Activated B cell treated with CpG ODN at 0.5 μM for 24 hours (primary cell): ENCODE measurements at regions of chr2 and their contacts with region 1.

Region 1: DNA sequence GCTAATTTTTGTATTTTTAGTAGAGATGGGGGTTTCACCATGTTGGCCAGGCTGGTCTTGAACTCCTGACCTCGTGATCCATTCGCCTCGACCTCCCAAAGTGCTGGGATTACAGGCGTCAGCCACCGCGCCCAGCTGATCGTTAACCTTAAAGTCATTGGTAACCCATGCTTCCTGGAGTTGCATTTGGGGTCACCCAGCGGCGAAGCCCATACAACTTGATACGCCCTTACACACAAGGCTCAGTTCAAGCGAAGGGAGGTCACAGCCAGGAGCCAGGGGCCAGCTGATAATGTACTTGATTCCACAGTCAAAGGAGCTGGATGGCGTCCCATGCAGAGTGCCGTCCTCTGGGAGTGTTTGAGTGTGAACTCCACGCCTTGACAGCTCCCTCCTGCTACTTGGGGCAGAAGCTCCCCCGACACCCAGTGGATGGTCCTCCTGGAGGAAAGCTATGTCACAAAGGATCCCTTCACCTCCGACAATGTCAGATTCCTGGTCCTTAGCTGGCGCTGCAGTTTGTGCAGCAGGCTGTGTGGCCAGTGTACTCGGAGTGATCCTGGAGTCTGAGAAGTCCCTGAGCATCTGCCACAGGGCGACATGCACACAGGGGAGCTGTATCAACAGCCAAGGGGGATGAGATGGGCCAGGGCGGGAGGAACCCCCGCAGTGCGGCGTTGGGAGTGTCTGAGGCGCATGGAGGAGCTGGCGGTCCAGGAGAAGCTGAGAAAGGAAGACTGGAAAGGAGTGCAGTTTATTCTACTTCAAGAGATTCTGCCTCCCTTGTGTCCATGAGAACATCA is 7.9 kb downstream of the CLHC1 start:
- DNase-seq: no peak
- ATAC-seq: no peak
- H3K4me3 Mint-ChIP-seq: peak overlapping the region; percentile 81
- H3K27ac Mint-ChIP-seq: peak overlapping the region; percentile 87
- H3K4me1 Mint-ChIP-seq: peaks cover 28% of the 10 kb centered on the region
- H3K27me3 Mint-ChIP-seq: no peaks in the 10 kb centered on the region
- CTCF ChIP-seq: no peak

Region 2: DNA sequence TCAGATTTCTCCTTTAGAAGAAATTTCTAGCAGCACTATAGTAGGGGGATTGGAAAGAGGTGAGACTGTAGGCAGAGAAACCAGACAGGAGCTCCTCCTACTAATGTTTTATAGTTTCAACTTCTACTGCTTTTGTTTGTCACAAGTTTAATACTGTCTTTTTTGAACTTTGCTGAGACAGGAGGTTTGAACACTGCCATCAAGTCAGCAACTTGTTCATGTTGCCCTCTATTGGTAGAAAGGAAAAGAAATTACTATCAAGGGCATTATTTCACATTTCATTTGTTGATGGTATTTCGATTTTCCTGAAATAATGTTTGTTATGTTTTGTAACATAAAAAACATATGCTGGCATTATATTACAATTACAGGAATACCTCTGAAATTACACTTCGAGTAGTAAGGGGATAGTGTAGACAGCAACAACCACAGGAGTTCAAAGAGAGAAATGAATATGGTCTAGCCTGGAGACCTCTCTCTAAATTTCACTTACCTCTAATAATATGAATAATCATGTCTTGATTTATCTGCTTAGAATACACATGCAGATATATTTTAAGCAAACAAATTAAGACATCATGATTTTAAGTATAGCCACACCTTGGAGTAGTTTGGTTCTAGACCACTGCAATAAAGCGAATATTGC is 207.9 kb after region 1 on chr2:
- CTCF ChIA-PET with region 1: no interaction called
- POLR2A ChIA-PET with region 1: no interaction called
- intact Hi-C with region 1: loop called (anchors 1 kb)
- DNase-seq: no peak
- ATAC-seq: no peak
- H3K4me3 Mint-ChIP-seq: no peak overlapping the region
- H3K27ac Mint-ChIP-seq: no peak overlapping the region
- H3K4me1 Mint-ChIP-seq: no peaks in the 10 kb centered on the region
- H3K27me3 Mint-ChIP-seq: no peaks in the 10 kb centered on the region
- CTCF ChIP-seq: no peak